ENCODE measurements at regions of chr2 and their contacts with region 1.

Region 1: GRCh38 chr2:112254466-112255239 is at the start of gene ZC3H8:
- DNase-seq: peak; percentile 80
- ATAC-seq: peak; percentile 96
- H3K4me3 ChIP-seq: peak within 1 kb of the TSS; percentile 72
- H3K27ac ChIP-seq: peak within 1 kb of the TSS; percentile 85
- H3K4me1 ChIP-seq: peaks cover 3% of the 10 kb centered on the region; the same call in 1 of the 2 replicates
- H3K27me3 ChIP-seq: no peaks in the 10 kb centered on the region
- CTCF ChIP-seq: peak; percentile 5 to 30 (median 13); a peak in 2 of 6 replicates
- EP300 ChIP-seq: no peak
- POLR2A ChIP-seq: peak; percentile 94
- RAD21 ChIP-seq: no peak
- polyA plus RNA-seq, gene ZC3H8: 16.5 to 16.6 TPM

Region 2: DNA sequence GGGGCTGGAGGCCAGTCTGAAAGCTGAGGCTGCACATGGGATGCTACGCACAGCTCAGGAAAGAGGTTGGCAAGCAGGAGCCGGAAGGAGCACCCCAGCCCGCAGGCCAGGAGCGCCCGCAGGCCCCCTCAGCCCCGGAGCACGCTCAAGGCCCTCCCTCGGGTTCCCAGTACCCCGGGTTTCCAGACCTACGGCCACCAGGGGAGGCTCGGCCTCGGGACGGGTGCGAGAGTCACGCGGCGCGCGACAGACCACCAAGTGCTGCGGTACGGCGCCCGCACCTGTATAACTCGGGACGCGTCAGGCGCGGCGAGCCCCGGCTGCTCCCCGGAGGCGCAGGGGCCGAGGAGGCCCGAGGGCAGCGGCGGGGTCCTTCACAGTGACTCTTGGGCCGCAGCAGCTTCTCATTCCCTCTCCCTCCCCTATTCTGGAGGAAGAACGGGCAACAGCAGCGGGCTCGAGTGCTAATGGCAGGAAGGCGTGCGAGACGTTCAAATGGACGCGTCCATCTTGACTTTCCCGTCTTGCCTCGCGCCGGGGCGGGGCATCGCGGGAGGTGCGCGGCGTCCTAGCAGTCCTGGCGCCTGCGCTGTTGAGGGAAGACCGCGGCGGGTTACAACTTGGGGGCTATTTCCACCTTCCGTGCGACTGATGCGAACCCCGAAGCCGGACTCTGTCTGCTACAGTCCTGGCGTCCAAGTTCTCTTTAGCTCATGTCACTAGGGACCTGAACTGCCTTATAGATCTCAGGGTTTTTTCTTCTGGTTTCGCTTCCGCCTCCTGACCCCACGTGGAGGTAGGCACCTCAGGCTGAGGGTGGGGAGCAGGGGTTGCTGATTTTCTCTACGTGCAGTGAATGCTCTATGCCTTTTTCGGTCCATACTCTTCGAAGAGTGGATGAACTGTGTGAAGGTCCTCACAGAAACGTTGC is 370.7 kb before region 1 on chr2 and contains the start of gene ANAPC1:
- CTCF ChIA-PET with region 1: interaction called, 4 read pairs
- POLR2A ChIA-PET with region 1: no interaction called
- RAD21 ChIA-PET with region 1: interaction called, 4 read pairs
- SMC1A ChIA-PET with region 1: interaction called, 6 read pairs
- in situ Hi-C with region 1: loop called (anchors 10 kb)
- intact Hi-C with region 1: loop called (anchors 5 kb)
- DNase-seq: peak; percentile 67
- ATAC-seq: peak; percentile 95
- H3K4me3 ChIP-seq: peak within 1 kb of the TSS; percentile 97
- H3K27ac ChIP-seq: peak within 1 kb of the TSS; percentile 90
- H3K4me1 ChIP-seq: no peaks in the 10 kb centered on the region; the same call in 1 of the 2 replicates
- H3K27me3 ChIP-seq: no peaks in the 10 kb centered on the region
- CTCF ChIP-seq: no peak
- EP300 ChIP-seq: no peak
- POLR2A ChIP-seq: peak; percentile 98
- RAD21 ChIP-seq: no peak
- polyA plus RNA-seq, gene ANAPC1: 10.0 to 11.8 TPM

Region 3: DNA sequence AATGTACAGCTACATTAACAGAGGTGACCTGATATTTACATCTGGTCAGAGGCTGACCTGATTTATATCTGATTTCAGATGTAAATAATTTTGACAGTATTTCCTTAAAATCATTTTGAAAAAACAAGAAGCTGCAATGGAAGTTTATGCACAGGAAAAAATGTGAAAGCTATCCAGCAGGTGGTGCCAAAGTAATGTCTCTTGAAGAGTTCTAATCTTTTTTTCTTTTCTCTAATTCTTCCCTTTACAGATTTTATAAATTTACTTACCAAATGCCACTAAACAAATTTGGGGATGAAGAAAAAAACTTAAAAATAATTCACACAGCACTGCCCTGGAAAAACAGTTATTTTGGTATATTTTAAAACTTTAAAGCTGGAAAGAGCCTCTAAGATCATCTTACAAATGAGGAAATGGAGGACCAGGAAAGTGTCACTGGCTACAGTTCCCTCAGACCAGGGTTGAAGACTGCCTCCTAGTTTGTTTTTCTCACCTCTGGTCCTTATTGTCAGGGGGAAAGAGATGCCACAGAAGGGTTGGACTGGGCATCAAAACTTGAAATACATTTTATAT is 132.9 kb before region 1 on chr2:
- CTCF ChIA-PET with region 1: interaction called, 11 read pairs
- POLR2A ChIA-PET with region 1: no interaction called
- RAD21 ChIA-PET with region 1: interaction called, 3 read pairs
- SMC1A ChIA-PET with region 1: interaction called, 8 read pairs
- in situ Hi-C with region 1: no loop called
- intact Hi-C with region 1: loop called (anchors 2 kb)
- DNase-seq: no peak
- ATAC-seq: no peak
- H3K4me3 ChIP-seq: no peak overlapping the region
- H3K27ac ChIP-seq: no peak overlapping the region
- H3K4me1 ChIP-seq: no peaks in the 10 kb centered on the region
- H3K27me3 ChIP-seq: no peaks in the 10 kb centered on the region
- CTCF ChIP-seq: peak; percentile 38 to 55 (median 41); a peak in 5 of 6 replicates
- EP300 ChIP-seq: no peak
- POLR2A ChIP-seq: no peak
- RAD21 ChIP-seq: peak; percentile 59

Region 4: GRCh38 chr2:112275306-112275886 is 20.7 kb after region 1 on chr2 and contains the start of gene ZC3H6:
- CTCF ChIA-PET with region 1: interaction called, 39 read pairs
- POLR2A ChIA-PET with region 1: interaction called, 4 read pairs
- RAD21 ChIA-PET with region 1: interaction called, 4 read pairs
- SMC1A ChIA-PET with region 1: interaction called, 6 read pairs
- in situ Hi-C with region 1: no loop called
- intact Hi-C with region 1: loop called (anchors 1 kb)
- DNase-seq: peak; percentile 85
- ATAC-seq: peak; percentile 97
- H3K4me3 ChIP-seq: peak within 1 kb of the TSS; percentile 99
- H3K27ac ChIP-seq: peak within 1 kb of the TSS; percentile 94
- H3K4me1 ChIP-seq: no peaks in the 10 kb centered on the region
- H3K27me3 ChIP-seq: no peaks in the 10 kb centered on the region
- CTCF ChIP-seq: peak in 1 of 3 experiments; percentile 1; a peak in 1 of 6 replicates
- EP300 ChIP-seq: no peak
- POLR2A ChIP-seq: peak; percentile 95
- RAD21 ChIP-seq: no peak
- polyA plus RNA-seq, gene ZC3H6: 0.53 to 1.2 TPM

Region 5: DNA sequence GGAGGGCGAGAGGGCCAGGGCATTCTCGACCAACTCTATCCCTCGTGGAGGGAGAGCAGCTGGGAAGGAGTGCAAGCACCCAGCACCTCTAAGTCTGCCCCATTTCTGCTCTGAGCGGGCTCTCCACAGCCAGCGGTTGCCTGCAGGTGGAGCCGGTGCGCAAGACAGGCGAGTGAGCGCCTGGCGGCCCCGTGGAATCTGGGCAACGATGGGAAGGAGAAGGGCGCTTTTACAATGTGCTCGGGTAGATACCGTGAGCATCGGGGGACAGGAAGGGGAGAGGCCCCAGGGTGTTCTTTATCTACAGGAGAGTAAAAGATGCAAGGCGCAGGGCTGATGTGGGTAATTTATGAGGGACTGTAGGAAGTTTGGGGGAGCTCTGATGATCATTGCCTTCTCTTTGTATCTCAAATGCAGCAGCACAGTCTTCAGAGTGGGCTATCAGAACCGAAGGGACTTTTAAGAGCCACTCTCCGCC is 226.4 kb after region 1 on chr2:
- CTCF ChIA-PET with region 1: interaction called, 13 read pairs
- POLR2A ChIA-PET with region 1: no interaction called
- RAD21 ChIA-PET with region 1: interaction called, 5 read pairs
- SMC1A ChIA-PET with region 1: interaction called, 3 read pairs
- in situ Hi-C with region 1: no loop called
- intact Hi-C with region 1: loop called (anchors 5 kb)
- DNase-seq: peak; percentile 26
- ATAC-seq: peak; percentile 90
- H3K4me3 ChIP-seq: peak overlapping the region; percentile 87
- H3K27ac ChIP-seq: peak overlapping the region; percentile 66
- H3K4me1 ChIP-seq: peaks cover 14% of the 10 kb centered on the region
- H3K27me3 ChIP-seq: no peaks in the 10 kb centered on the region
- CTCF ChIP-seq: peak; percentile 85 to 96 (median 95)
- EP300 ChIP-seq: no peak
- POLR2A ChIP-seq: no peak; the same call in none of the 2 replicates
- RAD21 ChIP-seq: peak; percentile 83

Measured in GM12878 (cell line).